ENCODE measurements at regions of chr21 and their contacts with region 1.

Region 1: GRCh38 chr21:40120940-40121575 is 253.8 kb downstream of the PCP4 start:
- DNase-seq: peak in 3 of 7 donors; percentile 21 to 37 (median 26)
- H3K4me3 ChIP-seq: no peak overlapping the region
- H3K27ac ChIP-seq: no peak overlapping the region
- H3K4me1 ChIP-seq: no peaks in the 10 kb centered on the region
- H3K27me3 ChIP-seq: peaks cover 5% of the 10 kb centered on the region
- CTCF ChIP-seq: peak; percentile 91 to 98 (median 94)
- POLR2A ChIP-seq: no peak

Region 2: GRCh38 chr21:39788383-39788782 is 332.7 kb before region 1 on chr21:
- intact Hi-C with region 1: loop called (anchors 5 to 10 kb)
- DNase-seq: peak; percentile 80 to 95 (median 92)
- H3K4me3 ChIP-seq: peak overlapping the region in 1 of 4 donors; percentile 21
- H3K27ac ChIP-seq: peak overlapping the region in 1 of 5 donors; percentile 27
- H3K4me1 ChIP-seq: peaks cover 0 to 11% of the 10 kb centered on the region in 2 donors
- H3K27me3 ChIP-seq: no peaks in the 10 kb centered on the region
- CTCF ChIP-seq: peak; percentile 75 to 99 (median 97)
- POLR2A ChIP-seq: peak in 1 of 2 donors; percentile 25

Region 3: DNA sequence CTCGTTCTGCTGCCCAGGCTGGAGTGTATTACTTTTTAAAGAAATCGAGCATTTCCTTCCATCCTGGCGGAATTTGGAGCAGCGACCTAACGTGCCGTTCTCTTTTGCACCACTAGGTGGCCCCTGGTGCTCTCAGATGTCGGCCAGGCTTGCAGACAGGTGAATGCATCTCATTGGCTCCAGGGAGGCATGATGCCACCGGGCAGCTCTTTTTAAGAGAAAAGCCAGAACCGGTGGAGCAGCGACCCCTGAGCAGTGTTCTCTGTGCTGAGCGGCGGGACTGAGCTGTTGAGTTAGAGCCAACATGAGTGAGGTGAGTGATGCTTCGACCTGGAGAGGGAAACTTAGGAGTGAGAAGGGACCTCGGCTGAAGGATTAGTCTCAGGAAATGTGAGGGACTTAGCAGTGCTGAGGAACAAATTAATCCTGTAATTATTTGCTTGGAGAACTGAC is 253.8 kb before region 1 on chr21 and contains the start of gene PCP4:
- intact Hi-C with region 1: loop called (anchors 5 to 10 kb)
- DNase-seq: peak; percentile 49 to 90 (median 72)
- H3K4me3 ChIP-seq: no peak within 1 kb of the TSS
- H3K27ac ChIP-seq: no peak within 1 kb of the TSS
- H3K4me1 ChIP-seq: no peaks in the 10 kb centered on the region
- H3K27me3 ChIP-seq: no peaks in the 10 kb centered on the region
- CTCF ChIP-seq: peak; percentile 75 to 90 (median 84)
- POLR2A ChIP-seq: peak in 1 of 2 donors; percentile 11
- total RNA-seq, gene PCP4: 1.00 to 35.8 (median 10.2) TPM

Measured in adrenal gland (tissue), 19 donors.